ENCODE measurements at regions of chr1 and their contacts with region 1.

Region 1: GRCh38 chr1:231421993-231422764 is at the start of gene EGLN1:
- DNase-seq: peak; percentile 65 to 91 (median 79)
- ATAC-seq: peak; percentile 86
- H3K4me3 ChIP-seq: peak within 1 kb of the TSS; percentile 73 to 80
- H3K4me3 Mint-ChIP-seq: peak within 1 kb of the TSS; percentile 95
- H3K27ac ChIP-seq: peak within 1 kb of the TSS; percentile 40 to 60
- H3K27ac Mint-ChIP-seq: peak within 1 kb of the TSS; percentile 93
- H3K4me1 ChIP-seq: peaks cover 39% of the 10 kb centered on the region
- H3K4me1 Mint-ChIP-seq: peaks cover 48% of the 10 kb centered on the region
- H3K27me3 ChIP-seq: no peaks in the 10 kb centered on the region
- H3K27me3 Mint-ChIP-seq: no peaks in the 10 kb centered on the region
- CTCF ChIP-seq: peak; percentile 40
- total RNA-seq, gene EGLN1: 8.5 to 12.2 TPM

Region 2: DNA sequence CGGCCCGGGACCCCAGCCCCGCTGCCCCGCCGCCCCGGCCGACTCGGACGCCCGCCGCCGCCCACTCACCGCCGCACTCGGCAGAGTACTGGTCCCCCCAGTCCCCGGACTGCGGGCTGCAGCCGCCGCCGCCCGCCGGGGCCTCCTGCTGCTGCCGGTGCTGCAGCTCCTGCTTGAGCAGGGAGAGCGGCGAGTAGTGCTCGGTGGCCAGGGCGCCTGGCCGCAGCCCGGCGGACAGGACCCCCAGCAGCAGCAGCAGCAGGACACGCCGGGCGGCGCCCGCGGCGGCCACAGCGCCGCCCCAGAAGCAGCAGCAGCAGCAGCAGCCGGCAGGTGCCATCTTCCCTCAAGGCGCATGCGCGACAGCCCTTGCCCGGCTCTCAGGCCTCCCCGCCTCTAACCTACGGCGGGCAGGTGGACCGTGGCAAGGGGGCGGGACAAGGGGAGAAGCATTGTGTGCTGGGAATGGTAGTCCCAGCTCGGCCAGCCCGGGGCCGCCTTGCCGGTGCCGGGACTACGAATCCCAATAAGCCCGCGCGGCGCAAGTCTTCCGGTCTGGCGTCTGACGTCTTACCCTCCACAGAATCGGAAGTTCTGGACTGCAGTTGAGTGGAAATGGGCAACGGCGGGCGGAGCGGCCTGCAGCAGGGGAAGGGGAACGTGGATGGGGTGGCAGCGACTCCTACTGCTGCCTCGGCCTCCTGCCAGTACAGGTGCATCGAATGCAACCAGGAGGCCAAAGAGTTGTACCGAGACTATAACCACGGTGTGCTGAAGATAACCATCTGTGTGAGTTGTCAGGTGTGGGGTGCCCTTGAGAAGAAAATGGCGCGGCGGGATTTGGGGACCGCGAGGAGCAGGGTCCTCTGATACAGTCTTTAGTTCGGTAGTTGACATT is 443.4 kb before region 1 on chr1 and contains the starts of genes ARV1 and TTC13:
- CTCF ChIA-PET with region 1: no interaction called
- POLR2A ChIA-PET with region 1: no interaction called
- intact Hi-C with region 1: loop called (anchors 5 to 10 kb)
- DNase-seq: peak; percentile 91 to 98 (median 96)
- ATAC-seq: peak; percentile 89
- H3K4me3 ChIP-seq: peak within 1 kb of the TSS; percentile 78 to 91
- H3K4me3 Mint-ChIP-seq: peak within 1 kb of the TSS; percentile 100
- H3K27ac ChIP-seq: peak within 1 kb of the TSS; percentile 74 to 88
- H3K27ac Mint-ChIP-seq: peak within 1 kb of the TSS; percentile 98
- H3K4me1 ChIP-seq: peaks cover 38% of the 10 kb centered on the region
- H3K4me1 Mint-ChIP-seq: peaks cover 34% of the 10 kb centered on the region
- H3K27me3 ChIP-seq: no peaks in the 10 kb centered on the region
- H3K27me3 Mint-ChIP-seq: no peaks in the 10 kb centered on the region
- CTCF ChIP-seq: peak; percentile 51
- total RNA-seq, gene ARV1: 1.4 to 1.5 TPM
- total RNA-seq, gene TTC13: 15.2 to 19.3 TPM

Region 3: DNA sequence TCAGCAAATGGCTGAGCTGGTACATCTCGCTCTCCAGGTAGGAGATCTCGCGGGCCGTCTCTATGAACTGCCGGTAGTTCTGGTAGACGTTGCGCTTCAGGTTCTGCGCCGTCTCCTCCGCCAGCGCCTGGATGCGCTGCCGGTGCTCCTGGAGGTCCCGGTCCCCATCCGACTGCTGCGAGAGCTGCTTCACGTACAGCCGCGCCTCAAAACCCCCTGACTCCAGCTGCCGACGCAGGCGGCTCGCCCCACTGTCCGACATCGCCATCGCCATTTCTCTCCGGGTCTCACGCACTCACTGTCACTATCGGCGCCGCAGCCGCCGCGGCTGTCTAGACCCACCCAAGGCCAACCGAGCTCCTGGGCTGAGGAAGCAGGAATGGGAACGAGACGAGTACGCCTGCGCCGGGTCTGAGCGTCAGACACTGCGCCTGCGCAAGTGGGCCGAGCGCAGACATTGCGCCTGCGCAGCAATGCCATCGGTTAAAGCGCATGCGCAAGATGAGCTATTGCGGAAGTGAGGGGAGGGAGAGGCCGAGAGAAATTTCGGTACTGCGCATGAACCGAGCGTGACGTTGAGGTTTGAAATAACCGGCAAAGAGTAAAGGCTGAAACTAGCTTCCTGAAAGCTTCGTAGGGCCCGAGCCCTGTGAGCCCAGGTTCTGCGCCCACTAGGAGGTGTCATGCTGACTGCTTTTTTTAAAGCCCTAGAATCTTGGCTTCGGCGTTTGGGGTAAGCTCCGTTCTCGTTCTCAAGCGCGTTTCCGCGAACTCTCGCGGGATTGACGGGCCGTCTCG is 84.5 kb before region 1 on chr1 and contains the start of gene EXOC8:
- CTCF ChIA-PET with region 1: interaction called, 3 read pairs
- POLR2A ChIA-PET with region 1: interaction called, 18 read pairs
- intact Hi-C with region 1: loop called (anchors 1 to 2 kb)
- DNase-seq: peak; percentile 95 to 99 (median 98)
- ATAC-seq: peak; percentile 83
- H3K4me3 ChIP-seq: peak within 1 kb of the TSS; percentile 95 to 98
- H3K4me3 Mint-ChIP-seq: peak within 1 kb of the TSS; percentile 97
- H3K27ac ChIP-seq: peak within 1 kb of the TSS; percentile 97 to 98
- H3K27ac Mint-ChIP-seq: peak within 1 kb of the TSS; percentile 99
- H3K4me1 ChIP-seq: peaks cover 55% of the 10 kb centered on the region
- H3K4me1 Mint-ChIP-seq: peaks cover 64% of the 10 kb centered on the region
- H3K27me3 ChIP-seq: no peaks in the 10 kb centered on the region
- H3K27me3 Mint-ChIP-seq: no peaks in the 10 kb centered on the region
- CTCF ChIP-seq: no peak
- total RNA-seq, gene EXOC8: 28.8 to 28.9 TPM

Region 4: DNA sequence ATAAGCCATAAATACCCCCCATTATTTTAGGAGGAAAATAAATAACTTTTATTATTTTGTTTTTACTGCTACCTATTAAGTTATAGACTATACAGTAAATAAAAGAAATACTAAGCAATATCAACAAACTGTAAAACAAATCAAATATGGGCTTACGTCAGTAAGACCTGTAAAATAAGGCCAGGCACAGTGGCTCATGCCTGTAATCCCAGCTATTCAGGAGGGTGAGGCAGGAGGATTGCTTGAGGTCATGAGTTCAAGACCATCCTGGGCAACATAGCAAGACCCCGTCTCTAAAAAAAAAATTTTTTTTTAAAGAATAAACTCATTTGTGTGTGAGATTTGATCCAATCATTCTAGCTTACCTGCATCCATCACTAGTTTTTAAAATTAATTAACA is 17.9 kb before region 1 on chr1:
- CTCF ChIA-PET with region 1: no interaction called
- POLR2A ChIA-PET with region 1: interaction called, 3 read pairs
- intact Hi-C with region 1: loop called in 1 of 2 experiments (anchors 2 kb)
- DNase-seq: no peak
- ATAC-seq: no peak
- H3K4me3 ChIP-seq: no peak overlapping the region
- H3K4me3 Mint-ChIP-seq: no peak overlapping the region
- H3K27ac ChIP-seq: no peak overlapping the region
- H3K27ac Mint-ChIP-seq: no peak overlapping the region
- H3K4me1 ChIP-seq: peaks cover 7% of the 10 kb centered on the region
- H3K4me1 Mint-ChIP-seq: peaks cover 35% of the 10 kb centered on the region
- H3K27me3 ChIP-seq: no peaks in the 10 kb centered on the region
- H3K27me3 Mint-ChIP-seq: no peaks in the 10 kb centered on the region
- CTCF ChIP-seq: no peak

Region 5: DNA sequence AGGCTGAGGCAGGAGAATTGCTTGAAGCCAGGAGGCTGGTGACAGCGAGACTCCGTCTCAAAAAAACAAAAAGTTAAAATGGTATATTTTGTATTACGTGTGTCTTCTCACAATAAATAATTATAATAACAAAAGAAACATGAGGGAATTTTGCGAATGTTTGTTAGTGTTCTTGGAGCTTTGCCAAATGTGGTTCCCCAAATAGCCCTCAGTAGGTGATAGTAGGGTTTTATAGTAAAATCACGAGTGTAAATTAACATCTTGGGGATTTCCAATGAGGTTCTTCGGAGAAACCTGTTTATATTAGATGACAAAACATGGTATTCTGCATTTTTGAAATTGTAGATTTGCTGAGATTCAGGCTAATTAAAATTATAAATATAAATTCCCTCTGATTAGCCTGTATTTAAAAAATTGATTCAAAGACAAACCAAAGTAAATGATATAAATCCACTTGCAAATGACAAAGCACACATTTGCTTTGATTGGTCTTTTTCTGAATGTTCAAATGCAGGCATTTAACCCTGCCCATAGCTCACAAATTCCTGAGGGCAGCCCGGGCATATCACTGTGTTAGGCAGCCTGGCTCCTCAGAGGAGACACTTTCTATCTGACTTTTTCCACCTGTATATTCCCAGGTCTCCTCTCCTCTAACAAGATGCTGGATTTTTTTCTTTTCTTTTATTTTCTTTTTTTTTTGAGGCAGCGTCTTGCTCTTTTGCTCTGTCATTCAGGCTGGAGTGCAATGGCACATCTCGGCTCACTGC is 56.0 kb after region 1 on chr1:
- CTCF ChIA-PET with region 1: no interaction called
- POLR2A ChIA-PET with region 1: no interaction called
- intact Hi-C with region 1: no loop called
- DNase-seq: no peak
- ATAC-seq: no peak
- H3K4me3 ChIP-seq: no peak overlapping the region
- H3K4me3 Mint-ChIP-seq: no peak overlapping the region
- H3K27ac ChIP-seq: no peak overlapping the region
- H3K27ac Mint-ChIP-seq: no peak overlapping the region
- H3K4me1 ChIP-seq: no peaks in the 10 kb centered on the region
- H3K4me1 Mint-ChIP-seq: no peaks in the 10 kb centered on the region
- H3K27me3 ChIP-seq: no peaks in the 10 kb centered on the region
- H3K27me3 Mint-ChIP-seq: peaks cover 14% of the 10 kb centered on the region
- CTCF ChIP-seq: no peak

Region 6: DNA sequence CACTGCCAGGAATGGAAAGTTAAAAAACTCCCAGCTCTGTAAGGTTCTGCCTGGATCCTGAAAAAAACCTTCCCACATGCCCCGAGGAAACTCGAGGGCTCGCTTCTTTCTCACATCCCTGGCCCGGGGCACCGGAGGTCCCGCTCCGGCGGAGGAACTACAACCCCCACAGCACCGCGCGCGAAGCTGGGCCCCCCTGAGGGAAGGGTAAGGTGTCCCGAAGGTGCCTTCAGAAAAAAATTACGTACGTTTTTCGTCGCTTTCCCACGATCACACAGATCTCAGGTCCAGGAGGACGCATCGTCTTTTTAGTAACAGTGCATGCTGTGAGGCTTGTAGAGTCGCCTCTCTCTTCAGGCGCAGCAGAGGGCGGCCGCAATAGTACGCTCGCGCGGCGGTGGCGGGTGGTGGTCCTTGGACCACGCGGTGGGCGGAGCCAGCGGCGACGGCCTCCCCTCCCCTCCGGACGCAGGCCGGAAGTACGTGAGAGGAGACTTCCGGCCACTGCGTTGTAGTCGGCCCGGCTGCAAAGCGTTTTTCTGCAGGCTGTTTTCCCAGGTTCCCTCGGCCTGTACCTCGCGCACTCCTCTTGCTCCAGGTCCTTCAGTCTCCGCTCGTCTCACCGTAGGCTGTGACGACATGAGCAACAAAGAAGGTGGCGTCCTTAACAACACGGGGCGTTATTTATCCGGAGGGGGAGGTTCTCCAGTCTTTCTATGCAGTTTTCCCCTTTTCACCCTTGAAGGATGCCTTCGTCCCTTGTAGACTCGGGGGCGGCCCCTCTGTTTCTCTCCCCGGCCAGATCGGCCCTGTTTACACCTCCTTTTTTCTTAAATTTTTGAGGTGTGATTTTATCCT is 106.2 kb after region 1 on chr1 and contains the start of gene TSNAX:
- CTCF ChIA-PET with region 1: no interaction called
- POLR2A ChIA-PET with region 1: interaction called, 16 read pairs
- intact Hi-C with region 1: loop called (anchors 1 kb)
- DNase-seq: peak; percentile 83 to 97 (median 89)
- ATAC-seq: peak; percentile 91
- H3K4me3 ChIP-seq: peak within 1 kb of the TSS; percentile 81 to 94
- H3K4me3 Mint-ChIP-seq: peak within 1 kb of the TSS; percentile 97
- H3K27ac ChIP-seq: peak within 1 kb of the TSS; percentile 93 to 98
- H3K27ac Mint-ChIP-seq: peak within 1 kb of the TSS; percentile 100
- H3K4me1 ChIP-seq: peaks cover 44% of the 10 kb centered on the region
- H3K4me1 Mint-ChIP-seq: peaks cover 46% of the 10 kb centered on the region
- H3K27me3 ChIP-seq: no peaks in the 10 kb centered on the region
- H3K27me3 Mint-ChIP-seq: no peaks in the 10 kb centered on the region
- CTCF ChIP-seq: no peak
- total RNA-seq, gene TSNAX: 19.7 to 21.7 TPM

Region 7: DNA sequence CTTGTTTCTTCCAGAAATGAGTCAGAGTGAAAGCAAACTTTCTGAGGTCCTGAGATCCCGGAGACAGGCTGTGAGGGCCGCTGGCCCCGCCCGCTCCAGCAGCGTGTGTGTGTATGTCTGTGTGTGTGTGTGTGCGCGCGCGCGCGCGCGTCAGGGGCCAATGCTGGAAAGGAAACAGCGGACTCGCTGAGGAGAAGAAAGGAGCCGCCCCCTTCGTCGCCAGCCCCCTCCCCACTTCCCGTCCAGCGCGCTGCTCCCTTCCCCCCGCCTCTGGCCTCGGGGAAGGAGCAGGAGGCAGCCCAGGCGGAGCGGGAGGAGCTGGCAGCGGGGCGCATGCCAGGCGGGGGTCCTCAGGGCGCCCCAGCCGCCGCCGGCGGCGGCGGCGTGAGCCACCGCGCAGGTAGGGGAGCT is 204.4 kb after region 1 on chr1 and contains the start of gene DISC1:
- CTCF ChIA-PET with region 1: no interaction called
- POLR2A ChIA-PET with region 1: no interaction called
- intact Hi-C with region 1: loop called in 1 of 2 experiments (anchors 5 kb)
- DNase-seq: peak; percentile 31 to 80 (median 63)
- ATAC-seq: peak; percentile 75
- H3K4me3 ChIP-seq: peak within 1 kb of the TSS; percentile 89 to 92
- H3K4me3 Mint-ChIP-seq: peak within 1 kb of the TSS; percentile 96
- H3K27ac ChIP-seq: peak within 1 kb of the TSS; percentile 32 to 50
- H3K27ac Mint-ChIP-seq: peak within 1 kb of the TSS; percentile 90
- H3K4me1 ChIP-seq: peaks cover 26% of the 10 kb centered on the region
- H3K4me1 Mint-ChIP-seq: peaks cover 42% of the 10 kb centered on the region
- H3K27me3 ChIP-seq: peaks cover 0 to 7% of the 10 kb centered on the region in 2 experiments
- H3K27me3 Mint-ChIP-seq: no peaks in the 10 kb centered on the region
- CTCF ChIP-seq: no peak
- total RNA-seq, gene DISC1: 9.6 to 10.1 TPM

Region 8: GRCh38 chr1:232684363-232685105 is 1262.4 kb after region 1 on chr1:
- CTCF ChIA-PET with region 1: no interaction called
- POLR2A ChIA-PET with region 1: no interaction called
- intact Hi-C with region 1: no loop called
- DNase-seq: no peak
- ATAC-seq: no peak
- H3K4me3 ChIP-seq: no peak overlapping the region
- H3K4me3 Mint-ChIP-seq: no peak overlapping the region
- H3K27ac ChIP-seq: no peak overlapping the region
- H3K27ac Mint-ChIP-seq: no peak overlapping the region
- H3K4me1 ChIP-seq: no peaks in the 10 kb centered on the region
- H3K4me1 Mint-ChIP-seq: no peaks in the 10 kb centered on the region
- H3K27me3 ChIP-seq: peaks cover 0 to 2% of the 10 kb centered on the region in 2 experiments
- H3K27me3 Mint-ChIP-seq: peaks cover 2% of the 10 kb centered on the region
- CTCF ChIP-seq: no peak